Sciatic nerve (tissue), 2 donors: ENCODE measurements at regions of chr3 and their contacts with region 1.

Region 1: GRCh38 chr3:194685718-194686555 is at the start of gene FAM43A:
- DNase-seq: peak; percentile 95
- ATAC-seq: peak; percentile 89
- total RNA-seq, gene FAM43A: 39.9 TPM

Region 2: DNA sequence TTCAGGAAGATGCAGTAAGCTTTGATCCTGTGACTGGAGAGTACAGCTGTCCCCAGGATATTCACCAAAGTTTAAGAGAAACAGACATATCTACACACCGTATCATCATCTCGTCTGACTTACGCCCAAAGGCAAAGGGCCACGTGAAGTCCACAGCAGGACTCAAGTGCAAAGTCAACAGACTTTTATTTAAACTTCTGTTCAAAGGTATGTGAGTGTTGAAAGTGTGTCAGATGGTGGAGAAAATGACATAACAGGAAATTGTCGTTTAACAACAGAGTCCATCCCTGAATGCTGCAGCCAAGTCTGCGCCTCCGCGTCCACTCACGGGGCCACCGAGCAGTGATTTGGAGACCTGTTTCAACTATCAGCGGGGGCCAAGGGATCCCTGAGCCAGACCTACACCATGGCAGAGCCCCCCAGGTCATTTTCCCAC is 419.4 kb after region 1 on chr3:
- intact Hi-C with region 1: loop called (anchors 2 kb)
- DNase-seq: no peak
- ATAC-seq: no peak